ENCODE measurements at regions of chr19 and their contacts with region 1.

Region 1: GRCh38 chr19:1406774-1407499 is 449 bp upstream of the DAZAP1 start:
- DNase-seq: peak; percentile 100
- H3K4me3 Mint-ChIP-seq: peak overlapping the region; percentile 77
- H3K27ac Mint-ChIP-seq: peak overlapping the region; percentile 76
- H3K4me1 Mint-ChIP-seq: peaks cover 35% of the 10 kb centered on the region
- H3K27me3 Mint-ChIP-seq: peaks cover 2% of the 10 kb centered on the region

Region 2: DNA sequence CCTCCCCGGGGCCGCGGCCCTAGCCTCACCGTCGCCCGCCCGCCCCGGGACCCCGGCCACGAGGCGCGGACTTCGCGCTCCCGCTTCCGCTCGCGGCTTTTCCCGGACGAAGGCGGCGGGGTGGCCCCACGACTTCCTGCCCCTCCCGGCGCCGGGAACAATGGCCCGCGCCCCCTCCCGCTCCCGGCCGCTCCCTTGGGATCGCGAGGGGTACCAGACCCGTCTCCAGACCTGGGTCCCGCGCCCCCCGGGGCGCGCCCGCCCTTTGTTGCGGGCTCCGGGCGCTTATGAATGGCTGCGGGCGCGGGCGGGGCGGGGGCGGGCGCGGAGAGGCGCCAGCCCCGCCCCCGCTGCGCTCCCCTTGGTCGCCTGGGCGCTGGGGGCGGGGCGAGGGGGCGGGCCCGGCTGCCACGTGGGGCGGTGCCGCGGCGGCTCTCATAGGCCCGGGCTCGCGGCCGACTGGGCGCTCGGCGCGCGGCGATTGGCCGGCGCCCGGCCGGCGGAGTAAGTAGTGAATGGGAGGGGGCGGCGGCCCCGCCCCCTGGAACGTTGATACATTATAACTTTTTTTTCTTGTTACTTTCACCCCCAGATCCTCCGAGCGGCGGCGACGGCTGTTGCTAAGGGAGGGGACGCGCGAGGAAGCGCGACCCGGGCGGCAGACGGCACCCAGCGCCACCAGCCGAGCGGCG is 157.5 kb before region 1 on chr19:
- intact Hi-C with region 1: loop called (anchors 10 kb)
- DNase-seq: peak; percentile 93
- H3K4me3 Mint-ChIP-seq: peak overlapping the region; percentile 78
- H3K27ac Mint-ChIP-seq: peak overlapping the region; percentile 46
- H3K4me1 Mint-ChIP-seq: peaks cover 9% of the 10 kb centered on the region
- H3K27me3 Mint-ChIP-seq: no peaks in the 10 kb centered on the region

Region 3: DNA sequence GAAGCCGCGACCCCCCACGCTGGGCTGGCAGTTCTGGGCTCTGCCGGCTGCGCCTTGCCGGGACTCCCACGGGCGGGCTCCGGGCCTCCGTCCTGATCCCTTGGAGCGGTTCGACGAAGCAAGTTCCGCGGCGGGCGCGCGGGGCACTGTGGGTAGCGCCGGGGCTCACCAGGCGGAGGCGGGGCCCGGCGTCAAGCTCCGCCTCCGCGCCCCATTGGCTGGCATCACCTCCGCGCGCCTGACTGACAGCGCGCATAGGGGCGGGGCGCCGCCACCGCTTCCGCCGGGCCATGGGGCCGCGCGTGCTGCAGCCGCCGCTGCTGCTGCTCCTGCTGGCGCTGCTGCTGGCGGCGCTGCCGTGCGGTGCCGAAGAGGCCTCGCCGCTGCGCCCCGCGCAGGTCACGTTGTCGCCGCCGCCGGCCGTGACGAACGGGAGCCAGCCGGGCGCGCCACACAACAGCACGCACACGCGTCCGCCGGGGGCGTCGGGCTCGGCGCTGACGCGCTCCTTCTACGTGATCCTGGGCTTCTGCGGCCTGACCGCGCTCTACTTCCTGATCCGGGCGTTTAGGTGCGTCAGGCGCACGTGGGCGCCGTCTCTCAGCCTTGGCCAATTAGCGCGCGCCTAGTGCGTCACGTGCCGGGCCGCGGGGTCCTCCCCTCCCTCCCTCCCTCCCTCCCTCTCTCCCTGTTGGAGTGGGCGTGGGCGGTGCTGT is 131.5 kb before region 1 on chr19 and contains the start of gene FAM174C:
- intact Hi-C with region 1: loop called (anchors 10 kb)
- DNase-seq: peak; percentile 93
- H3K4me3 Mint-ChIP-seq: peak within 1 kb of the TSS; percentile 92
- H3K27ac Mint-ChIP-seq: peak within 1 kb of the TSS; percentile 96
- H3K4me1 Mint-ChIP-seq: peaks cover 37% of the 10 kb centered on the region
- H3K27me3 Mint-ChIP-seq: no peaks in the 10 kb centered on the region
- total RNA-seq, gene FAM174C: 91.7 and 99.4 TPM in 2 replicates

Region 4: DNA sequence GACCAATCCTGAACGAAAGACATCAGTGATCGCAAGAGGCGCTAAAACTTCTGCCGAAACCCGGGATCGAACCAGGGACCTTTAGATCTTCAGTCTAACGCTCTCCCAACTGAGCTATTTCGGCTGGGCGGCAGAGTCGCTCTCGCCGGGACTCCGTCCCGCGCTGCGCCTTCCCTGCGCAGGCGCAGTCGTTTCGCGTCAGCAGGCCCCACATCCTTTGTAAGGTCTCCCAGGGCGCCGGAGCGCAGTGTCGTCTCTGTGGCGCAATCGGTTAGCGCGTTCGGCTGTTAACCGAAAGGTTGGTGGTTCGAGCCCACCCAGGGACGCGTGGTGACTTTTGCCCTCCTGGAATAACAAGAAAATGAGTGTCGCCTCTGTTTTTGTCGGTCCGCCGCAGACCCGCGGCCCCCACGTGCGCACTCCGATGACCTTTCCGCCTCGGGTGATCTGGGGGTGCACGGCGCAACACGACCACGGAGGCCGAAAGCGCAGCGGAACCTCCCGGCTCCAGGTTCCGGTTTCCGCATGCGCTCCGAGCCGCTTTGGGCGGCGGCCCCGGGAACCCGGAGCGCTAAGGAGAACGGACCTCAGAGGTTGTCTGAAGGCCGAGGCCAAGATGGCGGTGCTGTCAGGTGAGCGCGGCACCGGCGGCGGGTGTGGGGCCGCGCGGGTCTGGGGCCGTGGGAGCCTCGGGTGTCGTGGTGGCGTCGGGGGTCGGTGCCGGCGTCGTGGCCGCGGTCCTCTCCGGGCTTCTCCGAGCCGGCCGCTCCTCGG is 23.4 kb before region 1 on chr19 and contains the start of gene NDUFS7:
- intact Hi-C with region 1: loop called (anchors 1 kb)
- DNase-seq: peak; percentile 89
- H3K4me3 Mint-ChIP-seq: peak within 1 kb of the TSS; percentile 87
- H3K27ac Mint-ChIP-seq: peak within 1 kb of the TSS; percentile 91
- H3K4me1 Mint-ChIP-seq: peaks cover 10% of the 10 kb centered on the region
- H3K27me3 Mint-ChIP-seq: no peaks in the 10 kb centered on the region
- total RNA-seq, gene NDUFS7: 88.7 and 104 TPM in 2 replicates

Region 5: DNA sequence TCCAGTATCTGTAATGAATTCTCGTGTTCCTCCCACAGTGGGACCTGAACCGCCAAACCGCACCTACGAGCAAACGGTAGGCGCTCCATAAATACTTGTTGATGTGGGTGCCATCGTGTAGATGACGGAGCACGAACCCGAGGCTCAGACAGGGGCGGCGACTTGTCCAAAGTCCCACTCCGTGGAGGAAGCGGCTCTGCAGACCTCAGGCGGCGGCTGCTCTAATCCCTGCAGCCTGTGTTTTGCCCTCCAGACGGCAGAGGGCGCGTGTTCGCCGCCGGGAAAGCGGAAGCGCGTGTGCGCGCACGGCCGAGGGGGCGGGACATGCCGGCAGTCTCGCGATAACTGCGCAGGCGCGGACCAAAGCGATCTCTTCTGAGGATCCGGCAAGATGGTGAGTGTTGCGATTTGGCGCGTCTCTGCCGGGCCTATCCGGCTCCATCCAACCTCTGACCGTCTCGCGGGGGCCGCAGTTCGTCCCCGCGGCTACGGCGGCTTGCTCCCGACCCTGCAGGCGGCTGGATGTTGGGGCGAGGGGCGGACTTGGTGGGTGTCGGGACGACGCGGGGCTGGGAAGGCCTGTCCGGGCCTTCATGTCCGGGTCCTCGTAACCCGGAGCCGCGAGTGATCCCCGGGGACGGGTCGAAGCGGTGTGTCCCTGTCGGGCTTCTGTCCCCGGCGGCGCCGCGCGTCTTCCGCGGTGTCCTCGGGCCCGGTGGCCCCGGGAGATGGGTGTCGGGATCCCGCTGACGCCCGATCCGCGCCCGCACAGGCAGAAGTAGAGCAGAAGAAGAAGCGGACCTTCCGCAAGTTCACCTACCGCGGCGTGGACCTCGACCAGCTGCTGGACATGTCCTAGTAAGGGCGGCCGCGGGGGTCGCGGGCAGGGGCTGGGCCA is 31.3 kb after region 1 on chr19 and contains the start of gene RPS15:
- intact Hi-C with region 1: loop called (anchors 1 kb)
- DNase-seq: peak; percentile 94
- H3K4me3 Mint-ChIP-seq: peak within 1 kb of the TSS; percentile 99
- H3K27ac Mint-ChIP-seq: peak within 1 kb of the TSS; percentile 99
- H3K4me1 Mint-ChIP-seq: peaks cover 14% of the 10 kb centered on the region
- H3K27me3 Mint-ChIP-seq: no peaks in the 10 kb centered on the region
- total RNA-seq, gene RPS15: 1,450 and 1,471 TPM in 2 replicates

Measured in activated T-helper 2 cell treated with anti-CD3 and anti-CD28 coated beads, Interferon-gamma antibody, Interleukin-2, Interleukin-4, amounts not matched to agents 10 μg/mL and 5 μg/mL and 100 μg/mL, durations not matched to agents 14 hours and 24 hours and 36 hours (primary cell).